ENCODE measurements at regions of chr3 and their contacts with region 1.

Region 1: DNA sequence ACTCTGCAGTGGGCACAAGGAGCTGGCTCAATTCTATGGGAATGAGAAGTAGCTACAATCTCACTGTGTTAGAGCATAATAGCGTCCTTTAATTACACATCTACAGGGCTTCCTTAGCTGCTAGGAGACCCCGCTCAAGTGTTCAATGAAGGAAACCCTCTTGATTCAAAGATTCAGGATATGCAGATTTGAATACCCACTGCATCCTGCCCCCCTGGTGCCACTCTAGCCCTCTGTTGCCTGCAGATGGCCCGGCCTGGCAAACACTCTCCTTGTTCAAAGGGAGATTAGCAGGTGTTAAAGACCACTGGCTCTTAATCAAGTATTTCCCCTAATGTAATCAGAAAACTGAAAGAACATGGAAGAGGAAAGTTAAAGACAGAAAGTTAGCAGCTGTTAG is 356.6 kb downstream of the VGLL3 start:
- DNase-seq: no peak

Region 2: DNA sequence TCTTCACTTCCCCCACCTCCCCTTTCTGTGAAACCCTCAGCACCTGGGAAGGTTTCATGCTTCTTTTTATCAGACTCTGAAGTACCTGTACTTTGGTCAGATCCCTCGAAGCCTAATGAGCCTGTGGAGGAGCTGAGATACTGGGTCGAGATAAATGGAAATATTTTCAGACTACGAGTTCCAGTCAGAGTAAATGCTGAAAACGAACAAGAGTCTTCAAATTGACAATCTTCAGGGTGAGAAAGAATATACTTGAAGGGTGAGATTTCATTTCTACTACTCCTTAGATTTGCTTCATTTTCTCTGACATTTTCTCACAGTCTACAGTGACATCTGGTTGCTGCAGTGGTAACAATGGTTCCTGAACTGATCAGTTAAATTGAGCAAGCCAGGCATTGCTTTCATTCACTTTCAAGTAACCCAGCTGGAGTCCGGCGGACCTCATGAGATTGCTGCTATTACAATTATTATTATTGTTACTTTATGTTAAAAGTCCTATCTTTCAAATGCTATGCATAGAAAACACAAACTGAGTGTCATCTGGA is 19.4 kb after region 1 on chr3:
- intact Hi-C with region 1: loop called in 1 of 2 experiments (anchors 1 kb)
- DNase-seq: no peak